Motor neuron (in vitro differentiated cells): ENCODE measurements at regions of chr9 and their contacts with region 1.

Region 1: DNA sequence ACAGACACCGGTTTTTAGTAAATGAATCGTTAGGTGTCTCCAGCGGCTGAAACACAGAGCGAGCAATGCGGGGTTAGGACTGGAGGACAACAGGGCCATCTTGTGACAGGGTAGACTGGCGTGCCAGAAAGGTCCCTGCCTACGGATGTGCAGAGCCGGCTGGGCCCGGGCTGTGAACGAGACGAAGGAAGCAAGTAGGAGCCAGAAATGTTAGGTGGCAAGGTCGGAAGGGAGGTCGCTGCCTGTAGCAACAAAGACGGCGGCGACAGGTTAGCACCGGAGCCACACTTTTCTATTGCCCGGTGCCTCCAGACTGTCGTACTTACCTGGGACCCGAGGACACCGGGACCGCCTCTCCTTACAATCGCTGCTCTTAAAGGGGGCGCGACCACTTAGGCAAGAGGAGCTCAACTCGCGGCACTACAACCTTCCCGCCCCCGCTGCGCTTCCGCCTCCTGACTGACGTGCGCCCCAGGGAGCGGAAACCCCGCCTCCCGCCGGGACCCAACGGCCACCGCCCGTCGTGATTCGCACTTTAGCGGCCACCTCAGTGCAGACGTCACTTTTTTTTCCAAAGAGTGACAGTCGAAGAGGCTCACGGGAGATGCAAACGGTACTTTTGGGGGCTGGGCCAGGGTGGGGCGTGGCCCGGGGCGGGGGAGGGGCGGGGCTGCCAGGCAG is at the start of gene INIP:
- ATAC-seq: peak; percentile 96 to 98 (median 97)
- H3K4me3 ChIP-seq: peak within 1 kb of the TSS; percentile 72 to 96 (median 74)
- H3K27ac ChIP-seq: peak within 1 kb of the TSS; percentile 65 to 79
- H3K4me1 ChIP-seq: peaks cover 4 to 6% of the 10 kb centered on the region in 2 donors
- total RNA-seq, gene INIP: 10.0 to 26.8 (median 23.4) TPM

Region 2: GRCh38 chr9:112605518-112605917 is 112.3 kb before region 1 on chr9:
- in situ Hi-C with region 1: loop called in 1 of 9 experiments (anchors 25 kb)
- ATAC-seq: no peak
- H3K4me3 ChIP-seq: no peak overlapping the region
- H3K27ac ChIP-seq: no peak overlapping the region
- H3K4me1 ChIP-seq: peaks cover 0 to 6% of the 10 kb centered on the region in 2 donors

Region 3: DNA sequence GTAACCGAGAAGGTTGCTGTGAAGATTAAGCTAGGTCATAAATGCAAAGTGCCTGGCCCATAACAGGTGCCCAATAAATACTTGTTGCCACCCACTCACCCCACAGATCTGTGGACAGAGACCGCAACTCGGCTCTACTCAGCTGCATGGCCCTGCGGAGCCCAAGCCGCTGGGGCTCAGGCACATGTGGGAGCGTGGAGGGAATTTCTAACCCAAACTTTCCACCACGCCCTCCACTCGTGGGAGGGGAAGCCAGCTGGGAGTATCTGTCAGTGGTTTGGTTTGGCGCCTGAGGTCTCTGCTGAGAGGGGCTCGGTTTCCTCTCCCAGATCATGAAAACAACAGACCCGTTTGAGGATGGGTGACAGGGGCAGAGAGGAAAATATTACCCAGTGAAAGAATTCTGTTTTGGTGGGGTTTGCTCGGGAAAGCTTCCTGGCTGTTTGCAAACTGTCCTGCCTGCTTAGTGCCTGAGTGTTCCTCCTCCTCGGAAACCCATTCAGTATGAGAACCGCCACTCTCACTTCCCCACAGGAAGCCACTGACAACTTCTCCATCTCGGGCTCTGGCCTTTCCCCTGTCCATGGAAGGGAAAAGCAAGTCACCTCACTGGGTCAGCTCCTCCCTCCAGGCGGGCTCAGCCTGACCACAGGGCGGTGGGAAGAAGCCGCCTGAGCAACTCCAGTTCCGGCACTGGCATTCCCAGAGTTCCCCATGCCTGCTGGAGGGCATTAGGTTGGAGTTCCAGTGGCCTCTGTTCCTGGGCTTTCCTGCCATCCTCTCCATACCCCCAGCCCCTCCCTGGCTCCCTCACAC is 805.8 kb after region 1 on chr9:
- in situ Hi-C with region 1: no loop called
- ATAC-seq: peak in 3 of 8 experiments; percentile 35 to 50 (median 39)
- H3K4me3 ChIP-seq: no peak overlapping the region
- H3K27ac ChIP-seq: no peak overlapping the region
- H3K4me1 ChIP-seq: peaks cover 26 to 27% of the 10 kb centered on the region in 2 donors